ENCODE measurements at regions of chr1 and their contacts with region 1.

Region 1: GRCh38 chr1:54406339-54407153 is at the start of gene SSBP3:
- DNase-seq: peak; percentile 95
- H3K4me3 ChIP-seq: peak within 1 kb of the TSS; percentile 71 to 85 (median 80)
- H3K27ac ChIP-seq: peak within 1 kb of the TSS; percentile 61
- H3K4me1 ChIP-seq: peaks cover 41% of the 10 kb centered on the region
- H3K27me3 ChIP-seq: no peaks in the 10 kb centered on the region
- CTCF ChIP-seq: peak in 1 of 2 donors; percentile 6
- POLR2A ChIP-seq: no peak
- total RNA-seq, gene SSBP3: 49.5 and 59.4 TPM in 2 replicates

Region 2: DNA sequence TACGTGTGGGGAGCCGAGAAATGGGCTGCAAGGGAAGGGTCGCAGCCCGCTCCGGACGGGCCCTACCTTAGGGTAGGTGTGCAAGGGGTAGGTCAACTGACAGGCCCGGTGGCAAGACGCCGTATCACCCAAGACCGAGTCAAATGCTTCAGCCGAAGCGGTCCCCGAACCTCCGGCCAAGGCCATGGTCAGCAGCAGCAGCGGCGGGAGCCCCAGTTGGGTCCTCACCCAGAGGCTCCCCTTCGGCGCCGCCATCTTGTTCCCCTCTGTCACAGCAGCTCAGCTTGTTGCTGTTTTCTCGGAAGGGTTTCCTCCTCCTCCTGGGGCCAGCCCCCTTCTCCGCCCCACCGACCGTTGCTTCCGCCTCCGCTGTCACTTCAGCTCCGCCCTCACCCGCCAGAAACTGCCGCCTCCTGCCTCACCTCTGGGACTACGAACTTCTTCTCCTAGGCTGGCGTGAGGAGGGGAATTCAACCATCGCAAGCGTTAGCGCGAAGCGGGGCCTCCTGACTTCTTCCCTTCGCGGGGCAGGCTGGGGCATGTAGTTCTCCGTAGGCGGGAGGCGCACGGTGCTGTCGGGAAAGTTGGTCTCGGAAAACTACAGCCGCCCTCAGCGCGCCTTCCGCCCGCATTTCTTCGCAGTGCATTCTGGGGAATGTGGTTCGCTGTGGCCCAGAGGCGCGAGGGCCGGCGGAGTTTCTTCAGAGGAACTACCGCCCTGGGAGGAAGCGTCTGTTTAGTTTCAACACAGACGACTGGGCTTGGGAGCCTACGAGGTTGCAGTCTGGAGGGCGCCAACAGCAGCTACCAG is 353.4 kb before region 1 on chr1 and contains the starts of genes TCEANC2 and TMEM59:
- CTCF ChIA-PET with region 1: no interaction called
- POLR2A ChIA-PET with region 1: no interaction called
- dilution Hi-C with region 1: no loop called
- intact Hi-C with region 1: loop called (anchors 5 kb)
- DNase-seq: peak; percentile 99
- H3K4me3 ChIP-seq: peak within 1 kb of the TSS; percentile 81 to 96 (median 91)
- H3K27ac ChIP-seq: peak within 1 kb of the TSS; percentile 64
- H3K4me1 ChIP-seq: peaks cover 11% of the 10 kb centered on the region
- H3K27me3 ChIP-seq: no peaks in the 10 kb centered on the region
- CTCF ChIP-seq: no peak
- POLR2A ChIP-seq: peak; percentile 42
- total RNA-seq, gene TCEANC2: 5.1 and 6.1 TPM in 2 replicates
- total RNA-seq, gene TMEM59: 196 and 198 TPM in 2 replicates

Region 3: GRCh38 chr1:54199765-54200518 is 206.6 kb before region 1 on chr1 and contains the starts of genes CYB5RL and MRPL37:
- CTCF ChIA-PET with region 1: interaction called, 3 read pairs
- POLR2A ChIA-PET with region 1: no interaction called
- dilution Hi-C with region 1: no loop called
- intact Hi-C with region 1: loop called (anchors 2 kb)
- DNase-seq: peak; percentile 97
- H3K4me3 ChIP-seq: peak within 1 kb of the TSS; percentile 58 to 67 (median 58)
- H3K27ac ChIP-seq: peak within 1 kb of the TSS; percentile 55
- H3K4me1 ChIP-seq: peaks cover 19% of the 10 kb centered on the region
- H3K27me3 ChIP-seq: no peaks in the 10 kb centered on the region
- CTCF ChIP-seq: no peak
- POLR2A ChIP-seq: peak; percentile 83
- total RNA-seq, gene CYB5RL: 8.6 and 9.6 TPM in 2 replicates
- total RNA-seq, gene MRPL37: 109 TPM in 2 replicates

Region 4: DNA sequence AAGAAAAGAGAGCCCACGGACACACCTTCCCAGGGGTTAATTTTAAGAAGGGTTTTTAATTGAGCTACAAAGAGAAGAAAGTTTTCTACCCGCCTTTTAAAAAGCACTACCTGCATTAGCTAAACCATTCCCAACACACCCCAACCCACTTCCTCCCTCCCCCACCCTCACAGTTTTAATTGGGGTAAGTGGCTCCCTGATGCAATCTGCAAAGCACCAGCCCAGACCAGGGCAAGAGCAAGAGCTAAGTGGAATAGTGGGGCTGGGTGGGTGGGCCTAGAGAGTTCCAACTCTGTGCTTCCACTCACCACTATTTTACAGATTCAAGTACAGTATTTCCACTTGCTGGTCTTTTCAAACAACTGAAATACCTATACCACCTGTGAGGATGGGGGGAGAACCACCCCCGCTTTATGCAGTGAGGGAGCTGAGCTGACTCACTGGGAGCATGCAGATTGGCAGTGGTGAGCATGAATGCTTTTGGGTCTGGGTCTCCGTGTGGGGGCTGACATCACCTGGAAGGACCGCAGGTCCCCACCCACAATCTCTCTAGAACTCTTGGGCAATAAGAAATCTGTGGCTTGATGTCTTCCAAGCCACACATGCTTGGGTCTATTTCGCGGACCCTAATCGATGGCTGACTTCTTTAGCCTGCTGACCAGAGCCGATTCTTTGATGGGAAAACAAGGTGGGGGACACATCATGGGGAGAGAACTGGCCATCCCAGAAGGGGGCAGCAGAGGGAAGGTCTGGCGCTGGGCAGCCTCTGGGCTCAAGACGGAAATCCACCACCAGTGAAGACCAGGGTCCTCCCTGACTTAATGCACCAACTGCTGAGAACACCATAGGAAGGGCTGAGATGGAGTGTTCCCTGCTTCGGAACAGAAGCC is 95.9 kb before region 1 on chr1:
- CTCF ChIA-PET with region 1: interaction called, 19 read pairs
- POLR2A ChIA-PET with region 1: interaction called, 10 read pairs
- dilution Hi-C with region 1: no loop called
- intact Hi-C with region 1: loop called (anchors 1 kb)
- DNase-seq: peak; percentile 68
- H3K4me3 ChIP-seq: no peak overlapping the region
- H3K27ac ChIP-seq: no peak overlapping the region
- H3K4me1 ChIP-seq: peaks cover 12% of the 10 kb centered on the region
- H3K27me3 ChIP-seq: no peaks in the 10 kb centered on the region
- CTCF ChIP-seq: peak; percentile 73 to 79
- POLR2A ChIP-seq: no peak

Region 5: GRCh38 chr1:54384911-54385726 is 21.4 kb before region 1 on chr1:
- CTCF ChIA-PET with region 1: interaction called, 3 read pairs
- POLR2A ChIA-PET with region 1: interaction called, 5 read pairs
- dilution Hi-C with region 1: no loop called
- intact Hi-C with region 1: loop called (anchors 2 kb)
- DNase-seq: peak; percentile 28
- H3K4me3 ChIP-seq: no peak overlapping the region
- H3K27ac ChIP-seq: no peak overlapping the region
- H3K4me1 ChIP-seq: peaks cover 18% of the 10 kb centered on the region
- H3K27me3 ChIP-seq: no peaks in the 10 kb centered on the region
- CTCF ChIP-seq: no peak
- POLR2A ChIP-seq: no peak

Region 6: GRCh38 chr1:54474639-54475251 is 68.2 kb after region 1 on chr1:
- CTCF ChIA-PET with region 1: no interaction called
- POLR2A ChIA-PET with region 1: no interaction called
- dilution Hi-C with region 1: no loop called
- intact Hi-C with region 1: no loop called
- DNase-seq: no peak
- H3K4me3 ChIP-seq: peak overlapping the region in 2 of 3 experiments; percentile 23 to 25
- H3K27ac ChIP-seq: no peak overlapping the region
- H3K4me1 ChIP-seq: peaks cover 6% of the 10 kb centered on the region
- H3K27me3 ChIP-seq: peaks cover 0 to 4% of the 10 kb centered on the region in 2 experiments
- CTCF ChIP-seq: no peak
- POLR2A ChIP-seq: no peak

Region 7: DNA sequence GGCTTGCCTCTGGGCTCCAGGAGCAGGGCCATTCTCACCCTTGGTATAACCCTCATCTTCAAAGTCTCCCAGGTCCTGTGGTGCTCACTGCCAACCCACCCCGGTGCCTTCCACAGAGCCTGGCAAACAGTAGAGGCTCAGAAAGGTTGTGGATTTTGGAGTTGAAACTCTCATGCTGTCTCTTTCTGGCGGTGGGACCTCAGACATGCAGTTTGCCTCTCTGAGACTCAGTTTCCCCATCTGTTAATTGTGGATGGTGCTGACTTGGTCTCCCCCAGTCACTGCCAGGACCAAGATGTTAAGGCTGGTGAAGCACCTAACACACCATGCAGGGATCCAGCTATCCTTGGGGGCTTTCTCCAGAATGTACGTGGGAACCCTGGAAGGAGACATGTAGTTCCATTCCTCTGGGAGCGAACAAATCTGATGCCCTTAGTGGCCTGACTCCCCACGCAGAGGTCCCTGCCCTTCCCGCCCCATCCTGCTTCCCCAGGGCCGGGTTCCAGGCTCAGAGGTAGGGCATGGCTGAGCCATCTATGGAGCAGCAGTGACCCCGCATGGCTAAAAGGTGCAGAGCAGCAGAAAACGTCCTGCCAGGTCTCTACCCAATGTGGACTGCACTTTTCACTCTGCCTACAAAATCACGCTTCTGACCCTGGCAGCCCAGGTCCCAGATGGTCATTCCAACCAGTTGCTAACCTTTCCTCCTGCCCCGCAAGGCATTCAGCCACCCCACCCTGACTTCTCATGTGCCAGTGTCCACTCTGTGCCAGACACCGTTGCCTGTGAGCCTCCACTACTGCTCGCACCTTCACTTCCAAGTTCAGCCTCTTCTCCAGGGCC is 403.8 kb after region 1 on chr1:
- CTCF ChIA-PET with region 1: no interaction called
- POLR2A ChIA-PET with region 1: no interaction called
- dilution Hi-C with region 1: no loop called
- intact Hi-C with region 1: loop called (anchors 1 kb)
- DNase-seq: peak; percentile 54
- H3K4me3 ChIP-seq: no peak overlapping the region
- H3K27ac ChIP-seq: no peak overlapping the region
- H3K4me1 ChIP-seq: no peaks in the 10 kb centered on the region
- H3K27me3 ChIP-seq: no peaks in the 10 kb centered on the region
- CTCF ChIP-seq: peak; percentile 76 to 89
- POLR2A ChIP-seq: no peak

Measured in endothelial cell of umbilical vein (primary cell).